ENCODE measurements at regions of chr16 and their contacts with region 1.

Region 1: GRCh38 chr16:69150146-69150865 is 17.9 kb downstream of the UTP4 start:
- DNase-seq: no peak
- H3K4me3 ChIP-seq: no peak overlapping the region
- H3K27ac ChIP-seq: peak overlapping the region; percentile 9
- H3K4me1 ChIP-seq: no peaks in the 10 kb centered on the region
- H3K27me3 ChIP-seq: no peaks in the 10 kb centered on the region
- CTCF ChIP-seq: peak; percentile 53 to 87 (median 61)
- POLR2A ChIP-seq: no peak

Region 2: DNA sequence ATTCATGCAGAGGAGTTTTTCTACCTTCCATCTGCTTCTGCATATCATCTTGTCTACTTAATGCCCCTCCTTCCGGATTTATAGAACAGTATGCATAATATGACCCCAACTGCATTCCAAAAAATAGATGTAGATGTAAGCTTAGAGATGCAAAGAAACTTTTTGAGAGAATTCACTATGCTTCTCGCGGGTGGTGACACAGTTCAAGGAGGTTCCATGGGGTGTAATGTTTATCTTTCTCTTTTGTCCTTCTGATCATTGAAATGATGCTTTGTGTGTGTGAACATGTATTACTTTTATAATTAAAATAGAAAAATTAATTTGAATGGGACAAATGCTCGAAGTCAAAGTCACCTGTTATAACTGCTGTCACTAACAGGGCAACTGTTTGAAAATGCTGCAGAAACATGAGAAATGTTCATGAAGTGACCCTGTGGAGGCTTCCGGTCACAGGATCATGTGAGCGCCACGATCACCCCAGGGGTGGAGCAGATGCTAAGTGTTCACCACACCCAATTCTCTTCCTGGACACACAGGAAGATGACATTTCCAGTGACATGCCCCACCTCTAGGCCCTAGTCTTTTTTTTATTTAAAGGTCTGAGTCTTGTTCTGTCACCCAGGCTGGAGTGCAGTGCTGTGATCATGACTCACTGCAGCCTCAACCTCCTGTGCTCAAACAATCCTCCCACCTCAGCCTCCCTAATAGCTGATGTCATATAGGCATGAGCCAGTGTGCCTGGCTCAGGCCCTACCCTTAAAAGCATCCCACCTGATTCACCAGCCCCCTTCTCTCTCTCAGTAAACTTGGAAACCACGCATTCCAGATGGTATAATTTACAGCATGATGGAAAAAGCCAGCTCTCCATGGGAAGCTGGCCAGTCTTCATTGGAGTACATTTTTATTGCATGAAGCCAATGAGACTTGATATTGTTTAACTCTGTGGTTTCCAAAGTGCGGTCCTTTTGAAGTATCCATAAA is 1646.0 kb before region 1 on chr16:
- intact Hi-C with region 1: loop called (anchors 5 kb)
- DNase-seq: no peak
- H3K4me3 ChIP-seq: no peak overlapping the region
- H3K27ac ChIP-seq: peak overlapping the region; percentile 31
- H3K4me1 ChIP-seq: peaks cover 17% of the 10 kb centered on the region
- H3K27me3 ChIP-seq: no peaks in the 10 kb centered on the region
- CTCF ChIP-seq: no peak
- POLR2A ChIP-seq: no peak

Region 3: GRCh38 chr16:69105489-69106361 is 44.6 kb before region 1 on chr16 and contains the start of gene HAS3:
- intact Hi-C with region 1: no loop called
- DNase-seq: no peak
- H3K4me3 ChIP-seq: peak within 1 kb of the TSS; percentile 54 to 59
- H3K27ac ChIP-seq: no peak within 1 kb of the TSS
- H3K4me1 ChIP-seq: peaks cover 26% of the 10 kb centered on the region
- H3K27me3 ChIP-seq: no peaks in the 10 kb centered on the region
- CTCF ChIP-seq: no peak
- POLR2A ChIP-seq: no peak
- total RNA-seq, gene HAS3: 25.8 TPM

Region 4: DNA sequence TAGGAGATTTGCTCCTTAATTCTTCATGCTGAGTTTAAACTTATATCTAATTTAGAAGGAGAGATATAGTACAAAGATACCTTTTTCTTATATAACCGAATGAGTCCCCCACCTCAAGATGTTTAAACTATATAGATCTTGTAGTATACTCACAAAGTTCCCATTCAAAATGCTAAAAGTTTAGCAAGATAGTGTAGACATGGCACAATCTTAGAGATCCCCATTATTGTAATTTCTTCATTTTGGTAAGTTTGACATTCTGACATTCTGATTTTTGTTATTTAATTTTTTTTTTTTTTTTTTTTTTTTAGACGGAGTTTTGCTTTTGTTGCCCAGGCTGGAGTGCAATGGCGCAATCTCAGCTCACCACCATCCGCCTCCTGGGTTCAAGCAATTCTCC is 59.4 kb after region 1 on chr16:
- intact Hi-C with region 1: no loop called
- DNase-seq: no peak
- H3K4me3 ChIP-seq: no peak overlapping the region
- H3K27ac ChIP-seq: no peak overlapping the region
- H3K4me1 ChIP-seq: peaks cover 14% of the 10 kb centered on the region
- H3K27me3 ChIP-seq: no peaks in the 10 kb centered on the region
- CTCF ChIP-seq: no peak
- POLR2A ChIP-seq: no peak

Region 5: DNA sequence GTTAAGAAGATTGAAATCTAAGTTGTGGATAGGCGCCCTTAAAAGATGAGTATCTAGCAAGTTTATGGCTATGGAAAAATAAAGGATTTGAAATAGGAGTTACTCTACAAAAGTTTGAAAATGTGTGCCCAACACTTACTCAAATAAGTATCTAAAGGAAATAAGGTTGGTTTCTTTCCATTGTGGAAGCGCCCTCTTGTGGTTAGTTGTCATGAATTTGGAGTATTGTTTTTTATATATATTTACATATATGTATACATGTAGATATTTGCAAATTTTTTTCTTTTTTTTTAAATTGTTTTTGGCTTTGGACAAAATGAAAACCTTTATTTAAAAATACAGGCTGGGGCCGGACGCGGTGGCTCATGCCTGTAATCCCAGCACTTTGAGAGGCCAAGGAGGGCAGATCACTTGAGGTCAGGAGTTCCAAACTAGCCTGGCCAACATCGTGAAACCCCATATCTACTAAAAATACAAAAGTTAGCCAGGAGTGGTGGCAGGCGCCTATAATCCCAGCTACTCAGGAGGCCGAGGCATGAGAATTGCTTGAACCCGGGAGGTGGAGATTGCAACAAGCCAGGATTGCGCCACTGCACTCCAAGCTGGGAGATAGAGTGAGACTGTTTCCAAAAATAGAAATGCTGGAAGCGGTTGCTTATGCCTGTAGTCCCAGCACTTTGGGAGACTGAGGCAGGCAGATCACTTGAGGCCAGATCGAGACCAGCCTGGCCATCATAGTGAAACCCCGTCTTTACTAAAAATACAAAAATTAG is 136.8 kb after region 1 on chr16:
- intact Hi-C with region 1: loop called (anchors 5 kb)
- DNase-seq: no peak
- H3K4me3 ChIP-seq: no peak overlapping the region
- H3K27ac ChIP-seq: peak overlapping the region; percentile 45
- H3K4me1 ChIP-seq: no peaks in the 10 kb centered on the region
- H3K27me3 ChIP-seq: no peaks in the 10 kb centered on the region
- CTCF ChIP-seq: peak in 2 of 3 experiments; percentile 39 to 72
- POLR2A ChIP-seq: no peak